CD4-positive, alpha-beta memory T cell (primary cell): ENCODE measurements at regions of chr13 and their contacts with region 1.

Region 1: DNA sequence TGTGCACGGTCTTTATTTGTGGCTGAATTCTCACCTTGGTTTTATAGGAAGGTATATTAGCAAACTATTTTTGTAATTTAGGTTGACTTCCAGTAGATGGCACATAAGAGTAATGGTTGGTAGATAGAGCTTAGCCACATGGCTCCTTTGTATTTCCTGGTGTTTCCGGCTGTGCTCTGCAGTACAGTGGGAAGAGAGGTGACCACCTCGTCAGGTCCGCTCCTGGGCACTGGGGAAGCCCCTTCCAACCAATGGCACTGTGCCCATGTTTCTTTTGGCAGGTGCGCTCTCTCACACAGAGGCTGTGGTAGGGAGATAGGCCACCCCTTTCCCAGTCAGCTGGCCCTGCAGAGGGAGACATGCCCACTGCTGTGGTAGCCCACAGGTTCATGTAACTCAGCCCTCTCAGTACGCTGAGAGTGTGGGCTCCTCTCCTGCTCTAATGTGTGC is 74.3 kb upstream of the ATP12A start:
- DNase-seq: peak in 4 of 5 donors; percentile 19 to 51 (median 29)
- H3K4me3 ChIP-seq: no peak overlapping the region
- H3K4me3 Mint-ChIP-seq: no peak overlapping the region
- H3K27ac ChIP-seq: no peak overlapping the region
- H3K27ac Mint-ChIP-seq: peak overlapping the region in 2 of 7 donors; percentile 13 to 41
- H3K4me1 ChIP-seq: peaks cover 7% of the 10 kb centered on the region
- H3K4me1 Mint-ChIP-seq: peaks cover 6 to 13% (median 7%) of the 10 kb centered on the region in 4 donors
- H3K27me3 ChIP-seq: no peaks in the 10 kb centered on the region
- H3K27me3 Mint-ChIP-seq: no peaks in the 10 kb centered on the region

Region 2: GRCh38 chr13:24450530-24450929 is 155.4 kb before region 1 on chr13:
- CTCF ChIA-PET with region 1: no interaction called
- POLR2A ChIA-PET with region 1: no interaction called
- intact Hi-C with region 1: no loop called
- DNase-seq: no peak
- H3K4me3 ChIP-seq: no peak overlapping the region
- H3K4me3 Mint-ChIP-seq: no peak overlapping the region
- H3K27ac ChIP-seq: no peak overlapping the region
- H3K27ac Mint-ChIP-seq: peak overlapping the region in 2 of 7 donors; percentile 31 to 36
- H3K4me1 ChIP-seq: no peaks in the 10 kb centered on the region
- H3K4me1 Mint-ChIP-seq: peaks cover 0 to 2% (median 0%) of the 10 kb centered on the region in 4 donors
- H3K27me3 ChIP-seq: no peaks in the 10 kb centered on the region
- H3K27me3 Mint-ChIP-seq: no peaks in the 10 kb centered on the region

Region 3: GRCh38 chr13:24618014-24618955 is 12.3 kb after region 1 on chr13:
- CTCF ChIA-PET with region 1: interaction called, 77 read pairs
- POLR2A ChIA-PET with region 1: interaction called, 6 read pairs
- intact Hi-C with region 1: no loop called
- DNase-seq: peak; percentile 52 to 80 (median 64)
- H3K4me3 ChIP-seq: no peak overlapping the region
- H3K4me3 Mint-ChIP-seq: peak overlapping the region in 7 of 8 donors; percentile 10 to 48 (median 29)
- H3K27ac ChIP-seq: peak overlapping the region; percentile 25
- H3K27ac Mint-ChIP-seq: peak overlapping the region; percentile 81 to 94 (median 86)
- H3K4me1 ChIP-seq: peaks cover 21% of the 10 kb centered on the region
- H3K4me1 Mint-ChIP-seq: peaks cover 20 to 45% (median 31%) of the 10 kb centered on the region in 4 donors
- H3K27me3 ChIP-seq: no peaks in the 10 kb centered on the region
- H3K27me3 Mint-ChIP-seq: no peaks in the 10 kb centered on the region

Region 4: GRCh38 chr13:24671386-24672107 is 65.6 kb after region 1 on chr13:
- CTCF ChIA-PET with region 1: interaction called, 66 read pairs
- POLR2A ChIA-PET with region 1: no interaction called
- intact Hi-C with region 1: loop called (anchors 1 kb)
- DNase-seq: peak in 2 of 5 donors; percentile 12 to 29
- H3K4me3 ChIP-seq: no peak overlapping the region
- H3K4me3 Mint-ChIP-seq: peak overlapping the region in 1 of 8 donors; percentile 10
- H3K27ac ChIP-seq: no peak overlapping the region
- H3K27ac Mint-ChIP-seq: peak overlapping the region in 1 of 7 donors; percentile 29
- H3K4me1 ChIP-seq: peaks cover 10% of the 10 kb centered on the region
- H3K4me1 Mint-ChIP-seq: peaks cover 4 to 10% (median 7%) of the 10 kb centered on the region in 4 donors
- H3K27me3 ChIP-seq: no peaks in the 10 kb centered on the region
- H3K27me3 Mint-ChIP-seq: peaks cover under 1 to 8% of the 10 kb centered on the region in 2 donors

Region 5: GRCh38 chr13:24693862-24694471 is 88.0 kb after region 1 on chr13:
- CTCF ChIA-PET with region 1: interaction called, 16 read pairs
- POLR2A ChIA-PET with region 1: no interaction called
- intact Hi-C with region 1: no loop called
- DNase-seq: peak; percentile 30 to 47 (median 42)
- H3K4me3 ChIP-seq: no peak overlapping the region
- H3K4me3 Mint-ChIP-seq: peak overlapping the region in 7 of 8 donors; percentile 17 to 84 (median 59)
- H3K27ac ChIP-seq: no peak overlapping the region
- H3K27ac Mint-ChIP-seq: peak overlapping the region in 1 of 7 donors; percentile 64
- H3K4me1 ChIP-seq: peaks cover 7% of the 10 kb centered on the region
- H3K4me1 Mint-ChIP-seq: peaks cover 3 to 13% (median 7%) of the 10 kb centered on the region in 4 donors
- H3K27me3 ChIP-seq: no peaks in the 10 kb centered on the region
- H3K27me3 Mint-ChIP-seq: peaks cover 10 to 39% of the 10 kb centered on the region in 2 donors

Region 6: DNA sequence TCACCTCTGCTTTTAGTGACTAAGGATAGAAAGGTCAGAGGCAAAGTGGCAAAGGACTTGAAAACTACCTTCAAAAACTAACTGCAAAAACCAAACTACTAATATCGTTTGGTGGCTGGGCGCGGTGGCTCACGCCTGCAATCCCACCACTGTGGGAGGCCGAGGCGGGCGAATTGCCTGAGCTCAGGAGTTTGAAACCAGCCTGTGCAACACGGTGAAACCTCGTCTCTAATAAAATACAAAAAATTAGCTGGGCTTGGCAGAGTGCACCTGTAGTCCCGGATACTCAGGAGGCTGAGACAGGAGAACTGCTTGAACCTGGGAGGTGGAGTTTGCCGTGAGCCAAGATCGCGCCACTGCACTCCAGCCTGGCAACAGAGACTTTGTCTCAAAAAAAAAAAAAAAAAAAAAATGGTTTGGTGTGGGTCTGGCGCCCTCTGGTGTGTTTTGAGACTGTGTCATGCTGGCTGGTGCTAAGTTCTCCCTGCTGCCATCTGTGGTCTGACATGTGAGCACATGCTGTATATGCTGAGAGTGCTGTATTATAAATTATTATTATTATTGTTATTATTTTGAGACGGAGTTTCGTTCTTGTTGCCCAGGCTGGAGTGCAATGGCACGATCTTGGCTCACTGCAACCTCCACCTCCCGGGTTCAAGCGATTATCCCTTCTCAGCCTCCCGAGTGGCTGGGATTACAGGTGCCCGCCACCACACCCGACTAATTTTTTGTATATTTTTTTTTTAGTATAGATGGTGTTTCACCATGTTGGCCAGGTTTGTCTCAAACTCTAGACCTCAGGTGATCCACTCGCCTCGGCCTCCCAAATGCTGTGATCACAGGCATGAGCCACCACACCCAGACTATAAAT is 122.0 kb after region 1 on chr13:
- CTCF ChIA-PET with region 1: interaction called, 43 read pairs
- POLR2A ChIA-PET with region 1: no interaction called
- intact Hi-C with region 1: loop called (anchors 1 kb)
- DNase-seq: peak; percentile 73 to 80 (median 77)
- H3K4me3 ChIP-seq: no peak overlapping the region
- H3K4me3 Mint-ChIP-seq: no peak overlapping the region
- H3K27ac ChIP-seq: no peak overlapping the region
- H3K27ac Mint-ChIP-seq: peak overlapping the region in 2 of 7 donors; percentile 3 to 21
- H3K4me1 ChIP-seq: no peaks in the 10 kb centered on the region
- H3K4me1 Mint-ChIP-seq: no peaks in the 10 kb centered on the region
- H3K27me3 ChIP-seq: no peaks in the 10 kb centered on the region
- H3K27me3 Mint-ChIP-seq: peaks cover 7% of the 10 kb centered on the region in 2 donors

Region 7: DNA sequence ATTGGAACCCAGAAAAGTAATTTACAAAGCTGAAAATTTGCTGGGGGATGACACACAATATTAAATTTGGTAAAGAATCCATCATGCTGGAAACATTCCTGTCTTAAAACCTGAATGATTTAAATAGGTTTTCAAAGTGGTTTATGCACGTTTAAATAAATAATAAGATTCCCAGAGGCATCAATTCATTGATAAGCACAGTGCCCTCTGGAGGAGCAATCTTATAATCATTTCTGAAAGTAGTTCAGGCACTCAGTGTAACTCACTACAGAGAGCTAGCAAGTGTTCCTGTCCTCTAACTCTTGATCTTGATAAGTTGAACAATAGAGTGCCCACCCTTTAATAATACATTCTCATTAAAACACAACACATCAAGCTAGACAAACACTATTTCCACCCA is 1489.4 kb after region 1 on chr13:
- CTCF ChIA-PET with region 1: no interaction called
- POLR2A ChIA-PET with region 1: no interaction called
- intact Hi-C with region 1: no loop called
- DNase-seq: no peak
- H3K4me3 ChIP-seq: no peak overlapping the region
- H3K4me3 Mint-ChIP-seq: no peak overlapping the region
- H3K27ac ChIP-seq: no peak overlapping the region
- H3K27ac Mint-ChIP-seq: no peak overlapping the region
- H3K4me1 ChIP-seq: no peaks in the 10 kb centered on the region
- H3K4me1 Mint-ChIP-seq: no peaks in the 10 kb centered on the region
- H3K27me3 ChIP-seq: no peaks in the 10 kb centered on the region
- H3K27me3 Mint-ChIP-seq: peaks cover 16 to 26% of the 10 kb centered on the region in 2 donors